ENCODE measurements at regions of chr7 and their contacts with region 1.

Region 1: DNA sequence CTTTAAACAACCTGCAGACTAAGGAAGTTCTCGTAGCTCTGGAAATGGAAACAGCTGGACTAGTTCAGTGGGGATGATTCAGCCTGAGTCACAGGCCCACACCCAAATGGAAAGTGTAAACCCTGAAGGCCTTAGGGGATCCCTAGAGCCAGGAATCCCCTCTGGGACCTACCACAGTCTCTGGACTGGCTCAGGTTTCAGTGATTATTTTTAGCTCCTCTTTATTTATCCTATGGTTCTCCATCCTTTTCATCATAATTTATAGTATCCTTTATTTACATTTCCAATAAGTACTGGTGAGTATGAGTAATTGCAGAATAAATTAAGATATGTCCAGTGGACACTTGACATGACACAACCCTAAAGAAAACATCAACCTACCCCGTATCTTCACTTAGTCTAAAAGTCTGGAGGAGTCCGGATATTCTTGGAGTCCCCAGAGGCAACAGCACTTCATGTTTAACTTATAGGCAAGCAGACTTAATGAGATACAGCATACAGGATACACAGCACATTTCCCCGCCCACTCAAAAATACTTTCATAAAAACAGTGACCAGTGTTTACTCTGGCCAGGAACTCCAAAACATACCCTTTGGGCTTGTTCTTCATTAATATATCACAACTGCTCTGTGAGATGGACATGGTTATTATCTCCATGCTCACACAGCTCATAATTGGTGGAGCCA is 28.4 kb upstream of the SEMA3E start:
- DNase-seq: no peak
- ATAC-seq: no peak
- H3K4me3 Mint-ChIP-seq: no peak overlapping the region
- H3K27ac Mint-ChIP-seq: no peak overlapping the region
- H3K4me1 Mint-ChIP-seq: no peaks in the 10 kb centered on the region
- H3K27me3 Mint-ChIP-seq: no peaks in the 10 kb centered on the region
- CTCF ChIP-seq: no peak

Region 2: GRCh38 chr7:83248000-83248399 is 429.3 kb before region 1 on chr7:
- CTCF ChIA-PET with region 1: no interaction called
- POLR2A ChIA-PET with region 1: interaction called, 13 read pairs
- intact Hi-C with region 1: no loop called
- DNase-seq: no peak
- ATAC-seq: no peak
- H3K4me3 Mint-ChIP-seq: no peak overlapping the region
- H3K27ac Mint-ChIP-seq: no peak overlapping the region
- H3K4me1 Mint-ChIP-seq: no peaks in the 10 kb centered on the region
- H3K27me3 Mint-ChIP-seq: no peaks in the 10 kb centered on the region
- CTCF ChIP-seq: no peak

Region 3: DNA sequence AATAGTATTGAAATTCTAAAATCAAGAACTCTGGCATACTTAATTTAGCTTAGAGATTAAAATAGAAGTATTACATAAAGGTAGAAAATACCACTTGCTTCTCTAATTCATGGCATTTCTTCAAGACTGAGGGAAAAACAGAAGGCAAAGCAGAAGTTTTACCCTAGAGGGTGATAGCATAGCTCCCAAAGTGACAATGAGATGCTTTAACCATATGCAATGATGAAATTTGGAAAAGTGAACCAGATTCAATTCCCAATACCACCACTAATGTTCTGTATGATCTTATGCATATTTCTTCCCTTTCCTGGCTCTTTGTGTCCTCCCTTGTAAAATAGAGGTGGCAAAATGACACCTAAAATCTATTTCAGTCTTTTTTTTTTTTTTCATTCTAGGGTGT is 288.9 kb before region 1 on chr7:
- CTCF ChIA-PET with region 1: no interaction called
- POLR2A ChIA-PET with region 1: no interaction called
- intact Hi-C with region 1: no loop called
- DNase-seq: no peak
- ATAC-seq: no peak
- H3K4me3 Mint-ChIP-seq: no peak overlapping the region
- H3K27ac Mint-ChIP-seq: no peak overlapping the region
- H3K4me1 Mint-ChIP-seq: no peaks in the 10 kb centered on the region
- H3K27me3 Mint-ChIP-seq: no peaks in the 10 kb centered on the region
- CTCF ChIP-seq: no peak

Region 4: DNA sequence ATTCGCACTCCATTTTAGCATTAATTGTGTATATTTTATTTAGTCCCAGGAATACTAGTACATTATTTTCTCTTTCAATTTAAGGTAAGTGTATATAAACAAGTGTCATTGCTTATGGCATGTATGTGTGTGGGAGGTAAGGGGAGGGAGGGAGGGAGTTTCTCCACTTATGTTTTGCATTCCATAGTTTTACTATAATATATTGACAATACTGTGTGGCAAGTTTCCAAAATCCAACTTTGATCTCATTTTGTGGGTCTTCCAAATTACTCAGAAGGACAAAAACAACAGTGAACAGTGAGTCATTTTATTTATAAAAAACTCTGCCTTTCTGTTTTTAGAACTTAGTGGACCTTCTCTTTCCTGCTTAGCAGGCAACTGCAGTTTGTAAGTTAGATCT is 73.9 kb after region 1 on chr7:
- CTCF ChIA-PET with region 1: no interaction called
- POLR2A ChIA-PET with region 1: no interaction called
- intact Hi-C with region 1: no loop called
- DNase-seq: no peak
- ATAC-seq: no peak
- H3K4me3 Mint-ChIP-seq: no peak overlapping the region
- H3K27ac Mint-ChIP-seq: no peak overlapping the region
- H3K4me1 Mint-ChIP-seq: no peaks in the 10 kb centered on the region
- H3K27me3 Mint-ChIP-seq: no peaks in the 10 kb centered on the region
- CTCF ChIP-seq: no peak

Measured in activated B cell treated with CpG ODN at 0.5 μM for 24 hours (primary cell).